A549 (cell line): ENCODE measurements at regions of chr18 and their contacts with region 1.

Region 1: DNA sequence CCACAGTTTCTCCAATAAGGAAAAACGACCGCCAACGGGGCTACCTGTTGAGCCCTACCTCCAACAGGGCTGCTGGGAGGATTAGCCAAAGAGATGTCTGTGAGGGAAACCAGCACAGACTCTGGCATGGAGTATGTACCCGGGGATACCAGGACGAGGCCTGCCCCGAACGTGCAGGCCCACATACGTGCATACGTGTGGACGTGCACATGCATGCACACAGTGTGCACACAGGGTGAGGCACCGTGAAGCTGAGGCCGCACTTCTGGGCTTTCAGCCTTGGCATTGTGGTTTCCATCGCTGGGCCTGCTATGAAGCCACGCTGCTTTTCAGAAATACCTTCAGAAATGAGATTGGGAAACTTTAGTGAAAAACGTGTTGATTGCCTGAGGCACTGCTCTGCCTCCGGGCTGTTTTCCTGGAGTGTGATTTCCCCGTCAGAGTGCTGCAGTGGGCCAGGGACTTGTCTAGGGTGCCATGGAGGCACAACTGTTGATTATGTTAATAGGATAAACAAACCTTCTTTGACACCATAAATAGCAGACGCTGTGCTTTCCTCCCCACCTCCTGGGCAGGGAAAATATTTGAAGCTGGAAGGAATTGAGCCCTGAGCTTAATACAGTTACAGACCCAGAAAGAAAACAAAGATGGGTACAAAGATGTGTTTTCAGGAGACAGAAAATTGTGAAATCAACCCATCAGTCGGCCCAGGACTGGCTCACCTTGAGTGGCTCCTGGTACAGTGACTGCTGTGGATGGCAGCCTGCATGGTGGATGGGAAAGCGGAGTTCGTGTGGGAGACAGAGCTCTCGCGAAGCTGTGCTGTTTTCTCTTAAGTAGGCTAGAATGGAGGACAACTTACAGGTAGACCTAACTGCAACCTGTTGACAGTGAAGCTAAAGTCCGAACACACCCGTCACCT is 182.3 kb downstream of the FAM210A start:
- DNase-seq: no peak
- ATAC-seq: no peak
- H3K4me3 ChIP-seq: no peak overlapping the region
- H3K27ac ChIP-seq: 0 out of 6 replicates have a peak overlapping the region, but pooled peaks of 1 of the 2 experiments have one; percentile 77
- H3K4me1 ChIP-seq: peaks cover 46% of the 10 kb centered on the region
- CTCF ChIP-seq: no peak
- EP300 ChIP-seq: no peak
- POLR2A ChIP-seq: no peak
- RAD21 ChIP-seq: no peak

Region 2: GRCh38 chr18:13558124-13558523 is 14.1 kb after region 1 on chr18:
- CTCF ChIA-PET with region 1: interaction called, 10 read pairs
- POLR2A ChIA-PET with region 1: no interaction called
- DNase-seq: peak; percentile 32 to 36
- ATAC-seq: peak; percentile 77 to 93; a peak in 5 of 6 replicates
- H3K4me3 ChIP-seq: no peak overlapping the region
- H3K27ac ChIP-seq: no peak overlapping the region
- H3K4me1 ChIP-seq: no peaks in the 10 kb centered on the region; the same call in 2 of the 3 replicates
- CTCF ChIP-seq: peak; percentile 48
- EP300 ChIP-seq: no peak
- POLR2A ChIP-seq: no peak
- RAD21 ChIP-seq: peak; percentile 55 to 59